ENCODE measurements at regions of chr13 and their contacts with region 1.

Region 1: DNA sequence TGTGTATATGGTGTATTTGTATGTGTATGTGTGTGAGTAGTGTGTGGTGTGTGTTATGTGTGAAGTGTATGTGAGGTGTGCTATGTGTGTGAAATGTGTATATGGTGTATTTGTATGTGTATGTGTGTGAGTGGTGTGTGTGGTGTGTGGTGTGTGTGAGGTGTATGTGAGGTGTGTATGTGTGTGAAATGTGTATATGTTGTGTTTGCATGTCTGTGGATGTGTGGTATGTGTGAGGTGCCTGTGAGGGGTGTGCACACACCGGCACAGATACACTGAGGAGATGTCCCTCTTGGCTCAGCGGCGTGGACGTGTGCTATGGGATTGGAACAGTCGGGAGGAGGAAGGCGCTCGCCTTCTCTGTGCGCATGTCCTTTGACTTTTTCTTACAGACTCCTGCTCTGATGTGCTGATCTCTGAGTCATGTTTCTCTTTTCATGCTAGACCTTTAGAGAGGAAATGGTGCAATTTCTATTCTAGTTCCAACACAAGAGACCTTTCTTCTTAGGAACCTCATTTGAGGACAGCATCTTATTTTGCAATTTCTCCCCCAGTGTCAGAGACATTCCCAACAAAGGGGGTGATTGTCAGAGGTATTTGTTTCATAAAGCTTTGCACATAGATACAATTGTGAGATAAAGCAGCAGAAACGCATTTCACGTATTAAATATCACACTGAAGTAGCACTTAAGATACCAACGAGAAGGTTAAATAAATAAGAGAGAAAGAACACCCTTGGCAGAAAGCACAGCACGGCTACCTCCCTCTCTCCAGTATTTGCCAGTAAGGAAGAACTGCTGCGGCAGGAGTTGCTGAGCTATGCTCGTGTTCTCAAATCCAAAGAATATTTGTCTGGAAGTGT is 11.3 kb upstream of the TNFRSF19 start:
- DNase-seq: peak; percentile 92
- ATAC-seq: peak; percentile 98
- H3K4me3 ChIP-seq: peak overlapping the region; percentile 14; the same call in 1 of the 2 replicates
- H3K27ac ChIP-seq: peak overlapping the region; percentile 84
- H3K4me1 ChIP-seq: peaks cover 6% of the 10 kb centered on the region
- H3K27me3 ChIP-seq: no peaks in the 10 kb centered on the region
- CTCF ChIP-seq: no peak
- POLR2A ChIP-seq: no peak
- RAD21 ChIP-seq: no peak

Region 2: DNA sequence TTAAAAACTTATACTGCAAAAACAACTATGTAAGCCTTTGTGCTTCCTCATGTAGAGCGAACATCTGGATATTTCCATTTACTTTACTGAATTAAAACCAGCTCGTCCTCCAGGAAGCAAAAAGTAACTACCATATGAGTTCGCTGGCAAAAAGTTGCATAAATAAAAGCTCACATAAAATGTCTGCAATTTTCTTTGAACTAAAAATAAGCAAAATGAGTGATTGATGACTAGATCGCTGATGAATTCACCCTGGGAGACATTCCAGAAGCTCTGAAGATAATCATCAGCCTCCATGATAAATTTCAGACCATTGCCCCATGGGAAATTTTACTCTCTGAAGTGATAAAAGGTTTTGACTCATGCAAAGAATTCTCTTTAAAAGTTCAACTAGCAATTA is 58.1 kb before region 1 on chr13:
- CTCF ChIA-PET with region 1: no interaction called
- POLR2A ChIA-PET with region 1: no interaction called
- dilution Hi-C with region 1: no loop called
- in situ Hi-C with region 1: no loop called
- intact Hi-C with region 1: loop called (anchors 1 kb)
- DNase-seq: peak; percentile 96
- ATAC-seq: peak; percentile 59
- H3K4me3 ChIP-seq: no peak overlapping the region
- H3K27ac ChIP-seq: peak overlapping the region; percentile 45; the same call in 1 of the 2 replicates
- H3K4me1 ChIP-seq: peaks cover 21% of the 10 kb centered on the region
- H3K27me3 ChIP-seq: no peaks in the 10 kb centered on the region
- CTCF ChIP-seq: no peak
- POLR2A ChIP-seq: no peak
- RAD21 ChIP-seq: no peak

Region 3: DNA sequence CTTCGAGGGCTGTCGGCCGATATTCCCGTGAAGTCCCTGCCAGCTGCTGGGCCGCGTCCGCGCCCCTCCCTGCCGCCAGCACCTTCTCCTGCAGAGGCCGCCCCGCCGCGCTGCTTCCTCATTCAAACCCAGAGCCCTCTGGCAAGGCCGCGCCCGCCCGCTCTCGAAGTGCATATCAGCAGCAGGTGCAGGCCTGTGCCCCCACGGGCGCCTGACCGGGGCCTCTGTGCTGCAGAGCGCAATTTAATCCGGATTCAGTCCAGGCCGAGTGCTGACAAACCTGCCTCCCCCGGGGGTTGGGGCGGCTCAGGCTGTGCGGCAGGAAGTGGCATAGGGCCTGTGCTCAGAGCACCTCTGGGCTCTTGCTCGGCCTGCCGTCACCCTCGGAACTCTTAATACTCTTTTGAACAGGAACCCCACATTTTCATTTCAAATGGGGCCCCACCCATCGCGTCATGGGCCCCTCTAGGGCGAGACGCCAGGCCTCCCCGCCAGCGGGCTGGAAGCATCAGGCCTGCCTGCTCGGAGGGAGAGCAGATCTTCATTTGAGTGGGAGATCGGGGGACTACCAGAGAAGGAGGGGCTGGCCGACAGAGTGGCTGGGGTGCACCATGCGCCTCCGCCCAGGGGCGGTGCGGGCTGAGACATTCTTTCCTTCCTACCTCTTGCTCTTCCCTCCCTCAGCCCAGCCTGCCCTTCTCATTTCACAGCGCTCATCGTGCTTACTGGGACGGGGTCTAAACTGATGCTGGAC is 137.0 kb after region 1 on chr13:
- CTCF ChIA-PET with region 1: no interaction called
- POLR2A ChIA-PET with region 1: no interaction called
- dilution Hi-C with region 1: no loop called
- in situ Hi-C with region 1: no loop called
- intact Hi-C with region 1: no loop called
- DNase-seq: no peak
- ATAC-seq: no peak
- H3K4me3 ChIP-seq: no peak overlapping the region
- H3K27ac ChIP-seq: no peak overlapping the region
- H3K4me1 ChIP-seq: peaks cover 6% of the 10 kb centered on the region
- H3K27me3 ChIP-seq: no peaks in the 10 kb centered on the region
- CTCF ChIP-seq: no peak
- POLR2A ChIP-seq: no peak
- RAD21 ChIP-seq: no peak

Measured in IMR-90 (cell line).